Posterior vena cava (tissue), 2 donors: ENCODE measurements at regions of chr12 and their contacts with region 1.

Region 1: DNA sequence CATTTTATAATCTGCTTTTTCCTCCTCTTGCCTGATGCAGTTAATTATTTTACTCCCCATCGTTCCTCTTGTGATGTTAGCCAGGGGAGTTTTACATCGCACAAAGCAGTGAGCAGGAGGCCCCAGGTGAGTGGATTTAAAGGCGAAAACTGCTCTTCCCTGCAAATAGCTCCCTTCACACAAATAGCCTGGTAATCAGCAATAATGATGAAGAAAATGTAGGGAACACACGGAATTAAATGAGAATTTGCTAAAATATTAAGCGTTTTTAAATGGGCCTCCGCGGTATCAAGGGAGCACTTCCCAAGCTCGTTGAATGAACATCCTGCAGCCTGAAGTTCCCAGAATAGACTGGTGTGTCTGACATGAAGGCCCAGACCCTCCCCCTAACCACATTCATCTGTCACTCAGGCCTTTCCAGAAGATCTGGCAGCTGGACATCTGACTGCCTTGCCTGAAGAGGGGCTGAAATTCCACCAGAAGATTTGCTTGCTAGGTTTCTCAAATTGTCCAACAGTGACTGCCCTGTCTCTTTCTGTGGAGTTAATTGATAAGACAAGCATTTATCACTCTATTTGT is 127.2 kb downstream of the CCDC60 start:
- DNase-seq: no peak

Region 2: DNA sequence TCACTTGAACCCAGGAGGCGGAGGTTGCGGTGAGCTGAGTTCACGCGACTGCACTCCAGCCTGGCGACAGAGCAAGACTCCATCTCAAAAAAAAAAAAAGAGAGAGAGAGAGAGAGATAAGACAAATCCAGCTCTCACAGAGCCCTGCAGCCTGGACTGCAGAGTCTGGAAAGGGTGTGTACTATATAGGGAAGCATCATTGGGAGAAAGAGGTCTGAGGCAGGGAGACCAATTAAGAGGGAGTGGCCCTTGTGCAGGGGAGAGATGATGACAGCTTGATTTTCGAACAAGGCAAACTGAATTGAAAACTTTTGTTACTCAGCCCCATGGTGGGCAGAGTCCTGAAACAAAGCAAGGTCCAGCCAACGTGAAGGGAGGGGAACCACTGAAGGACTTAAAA is 11.0 kb before region 1 on chr12:
- intact Hi-C with region 1: loop called in 1 of 2 experiments (anchors 1 kb)
- DNase-seq: no peak